Activated CD8-positive, alpha-beta T cell treated with anti-CD3 and anti-CD28 coated beads for 36 hours (primary cell): ENCODE measurements at regions of chr19 and their contacts with region 1.

Region 1: GRCh38 chr19:18328340-18329034 is 5.6 kb upstream of the LSM4 start:
- DNase-seq: peak; percentile 95
- ATAC-seq: peak; percentile 98
- H3K4me3 Mint-ChIP-seq: peak overlapping the region; percentile 74
- H3K27ac Mint-ChIP-seq: peak overlapping the region; percentile 72
- H3K4me1 Mint-ChIP-seq: peaks cover 19% of the 10 kb centered on the region
- H3K27me3 Mint-ChIP-seq: no peaks in the 10 kb centered on the region
- CTCF ChIP-seq: peak; percentile 90

Region 2: GRCh38 chr19:18203863-18204393 is 124.6 kb before region 1 on chr19 and contains the start of gene RAB3A:
- CTCF ChIA-PET with region 1: interaction called, 6 read pairs
- POLR2A ChIA-PET with region 1: no interaction called
- intact Hi-C with region 1: loop called (anchors 2 kb)
- DNase-seq: peak; percentile 100
- ATAC-seq: peak; percentile 93
- H3K4me3 Mint-ChIP-seq: peak within 1 kb of the TSS; percentile 98
- H3K27ac Mint-ChIP-seq: peak within 1 kb of the TSS; percentile 89
- H3K4me1 Mint-ChIP-seq: peaks cover 21% of the 10 kb centered on the region
- H3K27me3 Mint-ChIP-seq: peaks cover 6% of the 10 kb centered on the region
- CTCF ChIP-seq: no peak
- total RNA-seq, gene RAB3A: 8.9 to 11.3 TPM

Region 3: GRCh38 chr19:18251587-18252369 is 76.7 kb before region 1 on chr19:
- CTCF ChIA-PET with region 1: interaction called, 22 read pairs
- POLR2A ChIA-PET with region 1: no interaction called
- intact Hi-C with region 1: no loop called
- DNase-seq: peak; percentile 91
- ATAC-seq: peak; percentile 95
- H3K4me3 Mint-ChIP-seq: no peak overlapping the region
- H3K27ac Mint-ChIP-seq: no peak overlapping the region
- H3K4me1 Mint-ChIP-seq: peaks cover 2% of the 10 kb centered on the region
- H3K27me3 Mint-ChIP-seq: peaks cover 21% of the 10 kb centered on the region
- CTCF ChIP-seq: peak; percentile 90

Region 4: GRCh38 chr19:18274781-18275356 is 53.6 kb before region 1 on chr19:
- CTCF ChIA-PET with region 1: interaction called, 235 read pairs
- POLR2A ChIA-PET with region 1: interaction called, 94 read pairs
- intact Hi-C with region 1: loop called (anchors 1 kb)
- DNase-seq: peak; percentile 32
- ATAC-seq: peak; percentile 6
- H3K4me3 Mint-ChIP-seq: no peak overlapping the region
- H3K27ac Mint-ChIP-seq: peak overlapping the region; percentile 63
- H3K4me1 Mint-ChIP-seq: peaks cover 31% of the 10 kb centered on the region
- H3K27me3 Mint-ChIP-seq: no peaks in the 10 kb centered on the region
- CTCF ChIP-seq: no peak

Region 5: DNA sequence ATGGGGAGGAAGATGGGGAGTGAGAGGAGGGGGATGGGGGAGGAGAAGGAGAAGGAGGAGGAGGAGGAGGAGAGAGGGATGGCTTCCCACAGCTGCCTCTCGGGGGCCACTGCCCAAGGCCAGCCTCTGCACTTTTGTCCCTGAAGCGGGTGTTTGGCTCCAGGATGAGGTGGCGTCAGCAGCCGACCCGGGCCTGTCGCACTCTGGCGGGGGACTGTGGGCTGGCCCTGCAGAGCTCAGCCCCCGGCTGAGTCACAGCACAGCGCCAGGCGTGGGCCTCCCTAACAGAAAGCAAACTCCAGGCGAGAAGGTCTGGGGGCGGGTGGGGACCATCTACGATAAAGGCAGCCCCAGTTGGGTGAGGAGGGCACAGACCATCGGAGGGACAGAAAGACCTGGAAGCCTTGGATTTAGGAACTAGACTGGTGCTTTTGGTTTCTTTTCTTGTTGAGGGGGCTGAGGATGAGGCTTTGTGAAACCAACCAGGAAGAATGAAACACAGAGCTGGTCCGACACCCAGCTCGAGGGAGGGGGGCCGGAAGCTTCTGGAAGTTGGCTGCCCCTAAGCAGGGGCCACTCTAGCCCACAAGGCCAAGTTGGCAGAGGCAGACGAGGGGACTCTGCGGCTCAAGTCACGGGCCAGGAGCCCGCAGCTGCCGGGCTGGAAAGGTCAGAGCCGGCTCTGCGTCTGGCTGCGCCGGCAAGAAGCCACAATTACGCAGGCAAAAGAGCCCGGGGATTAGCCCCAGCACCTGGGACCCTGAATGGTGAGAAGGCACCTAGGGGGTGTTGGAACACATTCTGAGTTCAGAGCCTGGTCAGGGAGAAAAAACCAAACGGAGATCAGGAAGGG is 23.8 kb before region 1 on chr19:
- CTCF ChIA-PET with region 1: interaction called, 10 read pairs
- POLR2A ChIA-PET with region 1: interaction called, 5 read pairs
- intact Hi-C with region 1: no loop called
- DNase-seq: peak; percentile 96
- ATAC-seq: peak; percentile 77
- H3K4me3 Mint-ChIP-seq: peak overlapping the region; percentile 92
- H3K27ac Mint-ChIP-seq: peak overlapping the region; percentile 96
- H3K4me1 Mint-ChIP-seq: peaks cover 40% of the 10 kb centered on the region
- H3K27me3 Mint-ChIP-seq: no peaks in the 10 kb centered on the region
- CTCF ChIP-seq: no peak

Region 6: DNA sequence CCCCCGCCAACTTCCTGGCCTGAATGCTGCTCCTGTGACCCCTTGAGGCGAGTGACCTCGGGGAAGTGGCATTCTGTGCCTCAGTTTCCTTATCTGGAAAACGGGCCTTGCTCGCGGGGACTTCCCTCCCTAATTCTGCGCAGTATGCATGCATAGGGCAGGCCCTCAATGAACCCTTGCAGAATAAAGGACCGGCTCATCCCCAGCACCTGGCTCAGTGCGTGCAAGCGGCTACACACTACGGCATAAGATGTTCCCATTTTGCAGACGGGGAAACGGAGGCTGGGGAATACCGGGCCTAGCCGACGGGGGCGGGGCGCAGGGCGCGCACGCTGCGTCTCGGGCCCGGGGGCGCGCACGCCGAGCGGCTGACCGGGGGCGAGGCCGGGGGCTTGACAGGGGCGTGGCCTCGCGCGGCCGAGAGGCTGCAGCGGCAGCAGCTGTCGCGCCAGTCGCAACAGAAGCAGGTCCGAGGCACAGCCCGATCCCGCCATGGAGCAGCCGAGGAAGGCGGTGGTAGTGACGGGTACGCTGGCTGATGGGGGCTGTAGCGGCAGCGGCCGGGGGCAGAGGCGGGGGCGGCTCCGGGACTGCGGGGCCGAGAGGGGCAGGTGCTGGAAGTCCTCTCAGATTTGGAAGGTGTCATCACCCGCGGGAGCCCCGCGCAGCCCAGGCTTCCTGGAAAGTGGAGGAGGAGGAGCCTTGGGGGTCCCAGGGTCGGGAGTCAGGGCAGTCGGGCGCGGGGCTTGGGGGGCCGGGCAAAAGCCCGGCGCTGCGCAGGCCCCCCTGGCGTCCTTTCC is 11.9 kb after region 1 on chr19 and contains the start of gene PGPEP1:
- CTCF ChIA-PET with region 1: interaction called, 57 read pairs
- POLR2A ChIA-PET with region 1: interaction called, 5 read pairs
- intact Hi-C with region 1: no loop called
- DNase-seq: peak; percentile 63
- ATAC-seq: peak; percentile 60
- H3K4me3 Mint-ChIP-seq: peak within 1 kb of the TSS; percentile 70
- H3K27ac Mint-ChIP-seq: peak within 1 kb of the TSS; percentile 84
- H3K4me1 Mint-ChIP-seq: peaks cover 16% of the 10 kb centered on the region
- H3K27me3 Mint-ChIP-seq: no peaks in the 10 kb centered on the region
- CTCF ChIP-seq: no peak
- total RNA-seq, gene PGPEP1: 21.7 to 23.9 TPM

Region 7: DNA sequence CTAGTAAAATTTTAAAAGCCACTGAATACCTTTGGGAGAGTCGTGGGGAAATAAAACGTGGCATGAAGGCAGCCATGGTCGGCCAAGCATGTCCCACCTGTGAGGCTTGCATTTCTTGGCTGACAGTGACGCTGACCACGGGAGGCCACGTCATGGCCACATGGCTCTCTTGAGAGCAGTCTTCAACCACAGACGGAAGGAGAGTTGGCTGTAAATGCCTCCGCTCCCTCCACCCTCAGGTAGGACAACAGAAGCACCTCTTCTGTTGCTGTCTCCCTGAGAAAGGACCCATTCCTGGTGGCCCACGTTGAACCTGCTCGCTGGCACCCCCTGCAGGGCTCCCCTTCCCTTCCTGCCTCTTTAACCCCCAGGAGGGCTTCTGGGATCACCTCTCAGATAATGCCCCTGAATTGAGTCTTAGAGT is 79.6 kb after region 1 on chr19:
- CTCF ChIA-PET with region 1: interaction called, 25 read pairs
- POLR2A ChIA-PET with region 1: no interaction called
- intact Hi-C with region 1: no loop called
- DNase-seq: peak; percentile 62
- ATAC-seq: peak; percentile 40
- H3K4me3 Mint-ChIP-seq: no peak overlapping the region
- H3K27ac Mint-ChIP-seq: no peak overlapping the region
- H3K4me1 Mint-ChIP-seq: peaks cover 5% of the 10 kb centered on the region
- H3K27me3 Mint-ChIP-seq: peaks cover 6% of the 10 kb centered on the region
- CTCF ChIP-seq: peak; percentile 58